CD8-positive, alpha-beta T cell (primary cell): ENCODE measurements at regions of chr14 and their contacts with region 1.

Region 1: GRCh38 chr14:49720744-49721143 is 27.8 kb downstream of the KLHDC1 start:
- DNase-seq: no peak
- ATAC-seq: no peak
- H3K4me3 ChIP-seq: no peak overlapping the region
- H3K4me3 Mint-ChIP-seq: no peak overlapping the region
- H3K27ac ChIP-seq: no peak overlapping the region
- H3K27ac Mint-ChIP-seq: no peak overlapping the region
- H3K4me1 ChIP-seq: no peaks in the 10 kb centered on the region
- H3K4me1 Mint-ChIP-seq: no peaks in the 10 kb centered on the region
- H3K27me3 ChIP-seq: no peaks in the 10 kb centered on the region
- H3K27me3 Mint-ChIP-seq: no peaks in the 10 kb centered on the region
- CTCF ChIP-seq: no peak

Region 2: DNA sequence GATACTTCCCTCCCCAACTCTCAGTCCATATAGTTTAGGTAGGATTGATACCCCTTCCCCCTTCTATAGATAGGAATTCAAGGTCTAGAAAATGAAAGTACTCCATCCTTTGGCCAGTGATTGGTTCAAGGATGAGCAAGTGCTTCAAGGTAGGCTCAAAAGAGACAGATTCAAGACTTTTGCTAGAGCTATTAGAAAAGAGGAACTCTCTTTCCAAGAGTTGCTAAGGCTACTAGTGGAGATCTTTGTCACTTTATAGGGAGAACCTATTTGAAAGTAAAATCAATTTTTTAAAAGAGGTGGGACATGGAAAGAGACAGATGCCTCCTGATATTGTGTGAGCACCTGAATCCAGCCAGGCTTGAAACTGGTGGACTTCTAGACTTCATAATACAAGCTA is 50.3 kb before region 1 on chr14:
- CTCF ChIA-PET with region 1: no interaction called
- POLR2A ChIA-PET with region 1: no interaction called
- intact Hi-C with region 1: no loop called
- DNase-seq: no peak
- ATAC-seq: no peak
- H3K4me3 ChIP-seq: no peak overlapping the region
- H3K4me3 Mint-ChIP-seq: no peak overlapping the region
- H3K27ac ChIP-seq: no peak overlapping the region
- H3K27ac Mint-ChIP-seq: no peak overlapping the region
- H3K4me1 ChIP-seq: no peaks in the 10 kb centered on the region
- H3K4me1 Mint-ChIP-seq: no peaks in the 10 kb centered on the region
- H3K27me3 ChIP-seq: no peaks in the 10 kb centered on the region
- H3K27me3 Mint-ChIP-seq: no peaks in the 10 kb centered on the region
- CTCF ChIP-seq: no peak

Region 3: DNA sequence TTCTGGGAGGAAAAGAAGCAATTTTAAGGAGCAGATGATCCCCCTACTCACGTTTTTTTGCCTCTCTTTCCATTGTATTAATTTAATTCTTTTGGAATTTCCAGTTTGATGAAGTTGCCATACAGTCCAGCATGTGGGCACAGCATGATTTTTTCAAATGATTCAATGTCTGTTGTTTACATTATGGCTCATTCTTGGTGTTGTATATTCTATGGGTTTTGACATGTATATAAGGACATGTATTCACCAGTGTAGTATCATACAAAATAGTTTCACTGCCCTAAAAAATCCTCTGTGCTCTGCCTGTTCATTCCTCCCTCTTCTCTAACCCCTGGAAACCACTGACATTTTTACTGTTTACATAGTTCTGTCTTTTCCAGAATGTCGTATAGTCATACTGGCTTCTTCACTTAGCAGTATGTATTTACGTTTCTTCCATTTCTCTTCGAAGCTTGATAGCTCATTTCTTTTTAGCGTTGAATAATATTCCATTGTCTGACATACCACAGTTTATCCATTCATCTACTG is 33.9 kb after region 1 on chr14:
- CTCF ChIA-PET with region 1: no interaction called
- POLR2A ChIA-PET with region 1: no interaction called
- intact Hi-C with region 1: loop called in 1 of 2 experiments (anchors 5 kb)
- DNase-seq: no peak
- ATAC-seq: no peak
- H3K4me3 ChIP-seq: no peak overlapping the region
- H3K4me3 Mint-ChIP-seq: no peak overlapping the region
- H3K27ac ChIP-seq: no peak overlapping the region
- H3K27ac Mint-ChIP-seq: no peak overlapping the region
- H3K4me1 ChIP-seq: no peaks in the 10 kb centered on the region
- H3K4me1 Mint-ChIP-seq: no peaks in the 10 kb centered on the region
- H3K27me3 ChIP-seq: no peaks in the 10 kb centered on the region
- H3K27me3 Mint-ChIP-seq: no peaks in the 10 kb centered on the region
- CTCF ChIP-seq: no peak